HCT116 (cell line): ENCODE measurements at regions of chr2 and their contacts with region 1.

Region 1: GRCh38 chr2:163155279-163155883 is 316.8 kb upstream of the KCNH7 start:
- DNase-seq: peak; percentile 18
- ATAC-seq: peak; percentile 82
- H3K4me3 ChIP-seq: no peak overlapping the region
- H3K27ac ChIP-seq: no peak overlapping the region
- H3K4me1 ChIP-seq: no peaks in the 10 kb centered on the region
- H3K27me3 ChIP-seq: no peaks in the 10 kb centered on the region
- CTCF ChIP-seq: peak; percentile 34 to 66 (median 41); a peak in 4 of 6 replicates
- POLR2A ChIP-seq: no peak
- RAD21 ChIP-seq: peak; percentile 68

Region 2: DNA sequence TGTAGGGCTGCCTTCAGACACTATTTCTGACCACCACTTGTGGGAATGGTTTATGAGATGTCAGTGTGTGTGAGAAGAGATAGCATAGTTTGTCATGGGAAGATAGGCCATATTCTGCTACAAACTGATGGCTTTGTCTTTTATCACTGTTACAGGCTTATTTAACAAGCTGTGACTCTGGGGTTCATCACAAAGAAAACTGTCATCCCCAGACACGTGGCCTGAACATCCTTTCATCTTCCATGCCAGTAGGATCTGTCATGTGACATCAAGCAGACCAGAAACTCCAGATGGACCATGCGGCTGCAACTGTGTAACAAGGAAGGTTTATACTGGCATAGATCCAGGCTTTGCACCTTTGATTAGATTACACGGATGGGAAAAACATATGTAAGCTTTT is 188.2 kb before region 1 on chr2:
- CTCF ChIA-PET with region 1: no interaction called
- POLR2A ChIA-PET with region 1: no interaction called
- RAD21 ChIA-PET with region 1: no interaction called
- intact Hi-C with region 1: no loop called
- DNase-seq: no peak
- ATAC-seq: no peak
- H3K4me3 ChIP-seq: no peak overlapping the region
- H3K27ac ChIP-seq: no peak overlapping the region
- H3K4me1 ChIP-seq: no peaks in the 10 kb centered on the region
- H3K27me3 ChIP-seq: peaks cover 6% of the 10 kb centered on the region; the same call in 1 of the 2 replicates
- CTCF ChIP-seq: no peak
- POLR2A ChIP-seq: no peak
- RAD21 ChIP-seq: no peak

Region 3: GRCh38 chr2:163573651-163574050 is 418.3 kb after region 1 on chr2:
- CTCF ChIA-PET with region 1: no interaction called
- POLR2A ChIA-PET with region 1: no interaction called
- RAD21 ChIA-PET with region 1: no interaction called
- intact Hi-C with region 1: no loop called
- DNase-seq: no peak
- ATAC-seq: no peak
- H3K4me3 ChIP-seq: no peak overlapping the region
- H3K27ac ChIP-seq: no peak overlapping the region
- H3K4me1 ChIP-seq: no peaks in the 10 kb centered on the region
- H3K27me3 ChIP-seq: peaks cover 9% of the 10 kb centered on the region
- CTCF ChIP-seq: no peak
- POLR2A ChIP-seq: no peak
- RAD21 ChIP-seq: no peak

Region 4: DNA sequence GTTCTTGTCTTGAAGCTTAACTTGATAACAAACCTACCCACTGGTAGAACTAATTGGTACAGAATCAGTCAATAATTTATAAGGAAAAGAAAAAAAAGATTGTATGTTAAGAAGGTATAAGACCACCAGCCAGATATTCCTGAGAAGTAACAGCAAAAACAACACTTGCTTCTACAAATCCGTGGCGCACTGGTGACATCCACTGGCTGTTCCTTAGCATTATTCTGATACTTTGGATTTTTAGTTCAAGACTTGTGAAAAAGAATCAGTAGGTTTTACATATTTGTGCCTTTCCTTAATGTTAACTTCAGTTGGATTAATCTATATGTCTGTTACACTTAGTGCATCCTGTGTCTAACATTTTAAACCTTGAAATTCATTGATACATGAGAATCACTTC is 1324.1 kb after region 1 on chr2:
- CTCF ChIA-PET with region 1: no interaction called
- POLR2A ChIA-PET with region 1: no interaction called
- RAD21 ChIA-PET with region 1: no interaction called
- intact Hi-C with region 1: loop called (anchors 5 kb)
- DNase-seq: peak; percentile 27
- ATAC-seq: no peak
- H3K4me3 ChIP-seq: no peak overlapping the region
- H3K27ac ChIP-seq: no peak overlapping the region
- H3K4me1 ChIP-seq: no peaks in the 10 kb centered on the region
- H3K27me3 ChIP-seq: peaks cover 23% of the 10 kb centered on the region
- CTCF ChIP-seq: peak; percentile 24 to 53 (median 26); a peak in 4 of 6 replicates
- POLR2A ChIP-seq: no peak
- RAD21 ChIP-seq: peak; percentile 60

Region 5: DNA sequence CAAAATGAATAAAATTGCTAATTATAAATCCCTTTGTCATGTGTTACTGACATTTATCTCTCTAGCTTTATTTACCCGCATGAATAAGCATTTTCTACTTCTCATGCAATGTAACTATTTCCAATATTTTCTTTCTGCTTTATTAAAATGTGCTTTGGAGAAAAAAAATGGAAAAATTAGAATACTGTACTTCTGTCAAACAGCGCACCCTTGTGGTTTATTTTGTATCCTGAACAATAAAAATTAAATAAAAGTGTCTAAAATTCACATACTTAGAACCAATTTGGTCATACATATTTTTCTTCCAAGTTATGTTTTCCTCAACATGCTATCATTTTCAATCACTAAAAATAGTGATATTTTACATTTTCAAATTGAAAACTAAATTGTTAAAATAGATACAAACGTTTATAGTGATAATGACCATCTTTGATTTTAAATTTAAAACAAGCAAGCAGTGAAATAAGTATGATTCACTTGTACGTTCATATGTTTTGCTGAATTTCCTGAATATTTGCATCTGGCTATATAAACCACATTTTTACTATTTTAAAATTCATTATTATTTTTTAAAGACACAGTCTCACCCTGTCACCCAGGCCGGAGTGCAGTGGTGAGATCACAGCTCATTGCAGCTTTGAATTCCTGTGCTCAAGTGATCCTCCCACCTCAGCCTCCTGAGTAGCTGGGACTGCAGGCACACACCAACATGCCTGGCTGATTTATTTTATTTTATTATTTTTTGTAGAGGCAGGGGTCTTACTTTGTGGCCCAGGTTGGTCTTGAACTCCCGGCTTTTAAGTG is 1561.8 kb after region 1 on chr2:
- CTCF ChIA-PET with region 1: no interaction called
- POLR2A ChIA-PET with region 1: no interaction called
- RAD21 ChIA-PET with region 1: no interaction called
- intact Hi-C with region 1: loop called (anchors 10 kb)
- DNase-seq: peak; percentile 10
- ATAC-seq: no peak
- H3K4me3 ChIP-seq: no peak overlapping the region
- H3K27ac ChIP-seq: no peak overlapping the region
- H3K4me1 ChIP-seq: no peaks in the 10 kb centered on the region
- H3K27me3 ChIP-seq: no peaks in the 10 kb centered on the region
- CTCF ChIP-seq: peak; percentile 45 to 76 (median 46); a peak in 4 of 6 replicates
- POLR2A ChIP-seq: no peak
- RAD21 ChIP-seq: peak; percentile 56